ENCODE measurements at regions of chr1 and their contacts with region 1.

Region 1: GRCh38 chr1:109790735-109791494 is 27.2 kb upstream of the EPS8L3 start:
- DNase-seq: peak; percentile 93
- ATAC-seq: peak; percentile 94
- H3K4me3 Mint-ChIP-seq: no peak overlapping the region
- H3K27ac Mint-ChIP-seq: peak overlapping the region; percentile 87
- H3K4me1 Mint-ChIP-seq: peaks cover 55% of the 10 kb centered on the region
- H3K27me3 Mint-ChIP-seq: no peaks in the 10 kb centered on the region

Region 2: GRCh38 chr1:109802901-109803561 is 12.1 kb after region 1 on chr1:
- CTCF ChIA-PET with region 1: interaction called, 40 read pairs
- POLR2A ChIA-PET with region 1: interaction called, 4 read pairs
- intact Hi-C with region 1: loop called in 1 of 2 experiments (anchors 1 kb)
- DNase-seq: no peak
- ATAC-seq: peak; percentile 22
- H3K4me3 Mint-ChIP-seq: peak overlapping the region; percentile 34
- H3K27ac Mint-ChIP-seq: peak overlapping the region; percentile 92
- H3K4me1 Mint-ChIP-seq: peaks cover 54% of the 10 kb centered on the region
- H3K27me3 Mint-ChIP-seq: no peaks in the 10 kb centered on the region

Region 3: GRCh38 chr1:109816175-109816811 is 25.4 kb after region 1 on chr1:
- CTCF ChIA-PET with region 1: interaction called, 3 read pairs
- POLR2A ChIA-PET with region 1: no interaction called
- intact Hi-C with region 1: loop called in 1 of 2 experiments (anchors 2 kb)
- DNase-seq: no peak
- ATAC-seq: no peak
- H3K4me3 Mint-ChIP-seq: no peak overlapping the region
- H3K27ac Mint-ChIP-seq: no peak overlapping the region
- H3K4me1 Mint-ChIP-seq: peaks cover 5% of the 10 kb centered on the region
- H3K27me3 Mint-ChIP-seq: no peaks in the 10 kb centered on the region

Region 4: DNA sequence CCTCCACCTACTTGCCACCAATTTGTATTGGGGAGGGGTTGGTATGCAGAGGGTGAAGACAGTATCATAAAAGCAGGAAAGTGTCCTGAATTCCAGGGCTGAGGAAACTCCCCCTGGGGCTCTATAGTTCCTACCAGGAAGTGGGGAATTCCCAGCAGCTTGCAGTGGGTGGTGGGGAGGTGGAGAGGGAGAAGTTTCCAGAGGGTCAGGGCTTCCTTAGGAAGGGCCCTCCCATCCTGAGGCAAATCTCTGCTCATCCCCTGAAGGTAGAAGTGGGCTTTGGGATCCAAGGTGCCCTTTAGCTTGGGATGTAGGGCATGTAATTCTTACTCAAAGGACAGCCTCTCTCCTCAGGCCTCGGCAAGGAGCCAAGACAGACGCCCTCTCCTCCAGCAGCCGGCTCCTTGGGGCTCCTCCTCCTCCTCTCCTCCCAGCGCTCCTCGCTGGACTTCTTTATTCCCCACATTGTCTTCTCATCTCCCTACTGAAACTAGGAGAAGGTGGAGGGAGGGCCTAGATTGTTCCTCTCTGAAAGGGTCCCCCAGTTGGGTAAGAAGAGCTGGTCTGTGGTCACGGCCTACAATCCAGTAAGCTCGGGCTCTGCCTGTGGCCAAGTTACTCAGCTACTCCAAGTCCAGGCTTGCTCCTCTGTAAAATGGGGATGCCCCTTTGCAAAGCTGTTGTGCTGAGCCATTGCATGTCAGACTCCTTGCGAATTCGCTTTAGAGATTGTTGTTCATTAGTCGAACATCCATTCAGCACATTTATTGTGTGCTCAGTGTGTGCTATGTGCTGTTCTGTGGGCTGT is 101.8 kb after region 1 on chr1:
- CTCF ChIA-PET with region 1: no interaction called
- POLR2A ChIA-PET with region 1: interaction called, 3 read pairs
- intact Hi-C with region 1: loop called (anchors 5 kb)
- DNase-seq: no peak
- ATAC-seq: no peak
- H3K4me3 Mint-ChIP-seq: no peak overlapping the region
- H3K27ac Mint-ChIP-seq: no peak overlapping the region
- H3K4me1 Mint-ChIP-seq: peaks cover 34% of the 10 kb centered on the region
- H3K27me3 Mint-ChIP-seq: no peaks in the 10 kb centered on the region

Region 5: GRCh38 chr1:110188035-110188618 is 397.2 kb after region 1 on chr1:
- CTCF ChIA-PET with region 1: no interaction called
- POLR2A ChIA-PET with region 1: no interaction called
- intact Hi-C with region 1: no loop called
- DNase-seq: no peak
- ATAC-seq: no peak
- H3K4me3 Mint-ChIP-seq: no peak overlapping the region
- H3K27ac Mint-ChIP-seq: no peak overlapping the region
- H3K4me1 Mint-ChIP-seq: peaks cover 8% of the 10 kb centered on the region
- H3K27me3 Mint-ChIP-seq: peaks cover 10% of the 10 kb centered on the region